ENCODE measurements at regions of chr6 and their contacts with region 1.

Region 1: DNA sequence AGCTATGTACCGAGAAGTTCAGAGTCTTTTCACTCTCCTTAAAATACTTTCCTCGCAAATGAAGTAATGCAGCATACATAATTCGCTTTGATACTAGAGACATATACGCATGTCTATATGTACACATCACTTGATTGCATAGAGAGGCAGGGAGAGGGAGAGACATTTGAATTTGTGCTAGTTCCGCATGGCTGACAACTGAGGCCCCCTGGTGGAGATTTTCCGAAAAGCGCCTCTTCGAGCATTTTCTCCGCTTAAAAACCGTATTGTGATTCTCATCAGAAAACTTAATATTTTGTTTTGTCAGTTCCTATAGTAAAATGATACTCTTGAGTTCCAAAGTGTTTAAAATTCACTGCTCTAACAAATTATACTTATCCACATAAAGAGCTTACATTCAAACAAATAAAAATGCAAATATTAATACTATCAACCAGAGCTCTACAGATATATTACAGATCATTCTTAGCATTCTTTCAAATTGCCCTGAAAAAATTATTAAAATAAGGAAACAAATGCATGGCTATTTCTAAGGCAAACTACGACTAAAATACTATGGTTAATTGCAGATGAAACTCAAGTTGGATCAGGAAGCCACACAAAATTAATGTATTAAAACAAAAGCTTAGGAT is 637 bp downstream of the MYLK4 start:
- DNase-seq: peak; percentile 32 to 50
- ATAC-seq: peak; percentile 50 to 66; a peak in 5 of 6 replicates
- H3K4me3 ChIP-seq: no peak overlapping the region
- H3K27ac ChIP-seq: no peak overlapping the region
- H3K4me1 ChIP-seq: no peaks in the 10 kb centered on the region
- CTCF ChIP-seq: peak; percentile 78
- EP300 ChIP-seq: no peak
- POLR2A ChIP-seq: no peak
- RAD21 ChIP-seq: peak; percentile 36 to 38; a peak in 3 of 5 replicates

Region 2: GRCh38 chr6:2725999-2726567 is 24.0 kb before region 1 on chr6:
- CTCF ChIA-PET with region 1: interaction called, 18 read pairs
- POLR2A ChIA-PET with region 1: no interaction called
- DNase-seq: no peak
- ATAC-seq: no peak
- H3K4me3 ChIP-seq: no peak overlapping the region
- H3K27ac ChIP-seq: no peak overlapping the region
- H3K4me1 ChIP-seq: no peaks in the 10 kb centered on the region
- CTCF ChIP-seq: no peak
- EP300 ChIP-seq: no peak
- POLR2A ChIP-seq: no peak
- RAD21 ChIP-seq: no peak

Region 3: DNA sequence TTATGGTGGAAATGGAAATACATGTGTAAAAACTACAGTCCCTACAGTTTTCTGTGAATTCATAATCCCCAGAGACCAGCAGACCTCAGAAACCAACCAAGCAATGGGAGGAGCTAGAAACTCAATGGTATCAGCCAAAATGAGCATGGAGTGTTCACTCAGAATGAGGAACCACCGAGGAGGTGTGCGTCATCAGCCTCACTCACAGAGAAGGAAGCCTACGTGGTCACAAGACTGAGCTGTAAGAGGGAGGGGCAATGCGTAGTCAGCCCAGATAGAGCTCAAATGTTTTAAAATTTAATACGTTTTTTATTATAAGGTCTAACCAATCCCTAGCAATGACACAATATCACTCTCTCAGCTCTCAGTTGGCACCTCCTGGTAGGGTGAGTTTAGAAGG is 16.8 kb before region 1 on chr6:
- CTCF ChIA-PET with region 1: interaction called, 65 read pairs
- POLR2A ChIA-PET with region 1: no interaction called
- DNase-seq: no peak
- ATAC-seq: no peak
- H3K4me3 ChIP-seq: no peak overlapping the region
- H3K27ac ChIP-seq: no peak overlapping the region
- H3K4me1 ChIP-seq: 0 out of 3 replicates have a peak, but pooled peaks cover 4% of the 10 kb centered on the region
- CTCF ChIP-seq: no peak
- EP300 ChIP-seq: no peak
- POLR2A ChIP-seq: no peak
- RAD21 ChIP-seq: no peak

Region 4: GRCh38 chr6:2738373-2738979 is 11.6 kb before region 1 on chr6:
- CTCF ChIA-PET with region 1: interaction called, 65 read pairs
- POLR2A ChIA-PET with region 1: no interaction called
- DNase-seq: peak; percentile 31 to 53
- ATAC-seq: peak; percentile 76 to 82; a peak in 5 of 6 replicates
- H3K4me3 ChIP-seq: no peak overlapping the region
- H3K27ac ChIP-seq: no peak overlapping the region
- H3K4me1 ChIP-seq: no peaks in the 10 kb centered on the region
- CTCF ChIP-seq: peak; percentile 65
- EP300 ChIP-seq: no peak
- POLR2A ChIP-seq: no peak
- RAD21 ChIP-seq: peak; percentile 69 to 82

Region 5: GRCh38 chr6:2764610-2765165 is 14.6 kb after region 1 on chr6:
- CTCF ChIA-PET with region 1: interaction called, 28 read pairs
- POLR2A ChIA-PET with region 1: interaction called, 6 read pairs
- DNase-seq: peak; percentile 47 to 69
- ATAC-seq: peak; percentile 86 to 93
- H3K4me3 ChIP-seq: peak overlapping the region; percentile 72
- H3K27ac ChIP-seq: peak overlapping the region; percentile 94 to 95
- H3K4me1 ChIP-seq: peaks cover 21% of the 10 kb centered on the region; the same call in 2 of the 3 replicates
- CTCF ChIP-seq: no peak
- EP300 ChIP-seq: no peak
- POLR2A ChIP-seq: peak; percentile 79
- RAD21 ChIP-seq: no peak